ENCODE measurements at regions of chr7 and their contacts with region 1.

Region 1: GRCh38 chr7:92904292-92905131 is 68.1 kb upstream of the CDK6 start:
- DNase-seq: peak; percentile 88 to 93
- H3K4me3 ChIP-seq: no peak overlapping the region
- H3K27ac ChIP-seq: peak overlapping the region; percentile 89
- H3K4me1 ChIP-seq: peaks cover 21% of the 10 kb centered on the region
- H3K27me3 ChIP-seq: no peaks in the 10 kb centered on the region
- CTCF ChIP-seq: no peak

Region 2: DNA sequence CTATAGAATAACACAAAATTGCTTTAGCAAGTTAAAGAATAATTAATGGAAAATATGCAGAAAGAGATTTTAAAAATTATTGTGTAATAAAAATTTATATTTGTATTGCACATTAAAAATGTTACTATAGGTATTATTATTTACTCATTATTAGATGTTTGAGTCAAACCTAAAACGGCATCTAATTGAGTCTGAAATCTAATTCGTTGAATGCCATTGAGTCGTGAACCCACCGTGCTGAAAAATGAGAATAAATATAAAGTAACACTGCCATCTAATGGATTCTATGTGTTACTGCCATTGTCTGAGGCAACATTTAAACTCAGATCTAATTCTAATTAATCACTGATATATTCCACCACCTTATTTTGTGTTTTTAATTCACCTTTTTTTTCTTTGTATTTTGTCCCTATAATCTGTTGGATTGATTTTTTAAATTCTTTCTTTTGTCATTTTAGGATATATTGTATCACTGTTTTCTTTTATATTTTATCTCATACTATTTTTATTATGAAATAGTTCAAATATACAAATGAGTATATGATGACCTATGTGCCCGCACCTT is 151.1 kb after region 1 on chr7:
- CTCF ChIA-PET with region 1: no interaction called
- POLR2A ChIA-PET with region 1: no interaction called
- intact Hi-C with region 1: loop called (anchors 5 kb)
- DNase-seq: peak in 1 of 2 experiments; percentile 50
- H3K4me3 ChIP-seq: no peak overlapping the region
- H3K27ac ChIP-seq: no peak overlapping the region
- H3K4me1 ChIP-seq: no peaks in the 10 kb centered on the region
- H3K27me3 ChIP-seq: no peaks in the 10 kb centered on the region
- CTCF ChIP-seq: peak; percentile 87

Measured in PC-9 (cell line).